ENCODE measurements at regions of chr16 and their contacts with region 1.

Region 1: GRCh38 chr16:50024684-50025536 is at the start of gene CNEP1R1:
- DNase-seq: peak; percentile 98
- total RNA-seq, gene CNEP1R1: 18.6 to 22.2 TPM

Region 2: DNA sequence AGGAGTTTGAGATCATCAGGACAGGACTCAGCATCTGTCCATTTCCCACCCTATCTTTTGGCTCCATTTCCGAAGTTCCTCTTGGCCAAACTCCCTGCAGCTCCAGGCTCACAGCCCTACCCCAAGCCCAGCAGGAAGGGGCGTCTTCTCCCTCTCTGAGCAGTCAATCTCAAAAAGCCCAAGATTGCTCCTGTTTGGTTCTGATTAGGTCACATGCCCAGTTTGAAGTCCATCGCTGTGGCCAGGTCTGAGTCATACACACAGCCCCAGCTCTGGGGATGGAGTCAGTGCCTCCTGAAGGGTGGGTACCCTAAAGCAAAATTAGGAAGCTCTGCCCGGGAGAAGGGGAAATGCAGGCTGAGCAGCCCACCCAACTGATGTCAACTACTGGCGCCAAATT is 632.3 kb after region 1 on chr16:
- intact Hi-C with region 1: loop called in 1 of 2 experiments (anchors 10 kb)
- DNase-seq: no peak